ENCODE measurements at regions of chr11 and their contacts with region 1.

Region 1: DNA sequence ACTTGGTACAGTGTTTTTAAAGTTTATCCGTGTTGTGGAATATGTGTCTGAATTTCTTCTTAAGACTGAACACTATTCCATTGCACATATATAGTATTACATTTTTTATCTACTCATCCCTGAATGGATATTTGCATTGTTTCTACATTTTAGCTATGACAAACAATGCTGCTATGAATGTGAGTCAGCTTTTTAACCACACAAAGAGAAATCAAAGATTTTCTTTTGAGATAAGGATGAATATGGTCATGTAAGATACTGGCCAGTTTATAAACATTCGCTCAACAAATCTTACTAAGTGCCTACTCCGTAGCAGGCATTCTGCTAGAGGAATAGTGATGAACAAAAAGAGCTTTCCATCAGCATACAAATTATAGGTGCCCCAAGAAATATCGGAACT is 16.5 kb upstream of the OR9G4 start:
- DNase-seq: no peak
- ATAC-seq: no peak
- H3K4me3 ChIP-seq: no peak overlapping the region
- H3K27ac ChIP-seq: no peak overlapping the region
- H3K4me1 ChIP-seq: no peaks in the 10 kb centered on the region
- H3K27me3 ChIP-seq: peaks cover 0 to 5% (median 0%) of the 10 kb centered on the region in 9 donors
- CTCF ChIP-seq: no peak
- POLR2A ChIP-seq: no peak

Region 2: DNA sequence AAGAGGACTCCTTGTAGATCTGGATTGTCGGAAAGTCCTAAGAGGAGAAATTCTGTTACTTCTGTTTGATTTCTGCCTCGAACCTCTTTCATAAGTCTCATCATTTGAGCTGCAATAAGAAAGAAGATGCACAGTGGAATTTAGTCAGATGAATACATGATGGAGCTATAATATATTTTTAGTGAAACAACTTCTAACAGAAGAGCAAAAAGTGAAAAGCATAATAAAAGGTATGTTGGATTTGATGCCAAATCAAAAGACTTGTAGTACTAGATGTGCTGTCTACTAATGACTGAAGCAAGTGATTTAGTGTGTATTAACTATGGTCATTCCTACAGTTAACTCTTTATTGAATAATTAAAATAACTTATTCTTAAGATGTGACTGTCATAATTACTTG is 122.6 kb before region 1 on chr11 and contains the start of gene OR5AP2:
- intact Hi-C with region 1: loop called in 1 of 10 experiments (anchors 5 kb)
- DNase-seq: no peak
- ATAC-seq: no peak
- H3K4me3 ChIP-seq: no peak within 1 kb of the TSS
- H3K27ac ChIP-seq: no peak within 1 kb of the TSS
- H3K4me1 ChIP-seq: no peaks in the 10 kb centered on the region
- H3K27me3 ChIP-seq: no peaks in the 10 kb centered on the region
- CTCF ChIP-seq: no peak
- POLR2A ChIP-seq: no peak
- total RNA-seq, gene OR5AP2: not detected

Region 3: GRCh38 chr11:56700242-56700913 is 64.6 kb before region 1 on chr11:
- intact Hi-C with region 1: no loop called
- DNase-seq: no peak
- ATAC-seq: peak in 1 of 4 donors; percentile 45
- H3K4me3 ChIP-seq: no peak overlapping the region
- H3K27ac ChIP-seq: no peak overlapping the region
- H3K4me1 ChIP-seq: no peaks in the 10 kb centered on the region
- H3K27me3 ChIP-seq: no peaks in the 10 kb centered on the region
- CTCF ChIP-seq: no peak
- POLR2A ChIP-seq: no peak

Region 4: DNA sequence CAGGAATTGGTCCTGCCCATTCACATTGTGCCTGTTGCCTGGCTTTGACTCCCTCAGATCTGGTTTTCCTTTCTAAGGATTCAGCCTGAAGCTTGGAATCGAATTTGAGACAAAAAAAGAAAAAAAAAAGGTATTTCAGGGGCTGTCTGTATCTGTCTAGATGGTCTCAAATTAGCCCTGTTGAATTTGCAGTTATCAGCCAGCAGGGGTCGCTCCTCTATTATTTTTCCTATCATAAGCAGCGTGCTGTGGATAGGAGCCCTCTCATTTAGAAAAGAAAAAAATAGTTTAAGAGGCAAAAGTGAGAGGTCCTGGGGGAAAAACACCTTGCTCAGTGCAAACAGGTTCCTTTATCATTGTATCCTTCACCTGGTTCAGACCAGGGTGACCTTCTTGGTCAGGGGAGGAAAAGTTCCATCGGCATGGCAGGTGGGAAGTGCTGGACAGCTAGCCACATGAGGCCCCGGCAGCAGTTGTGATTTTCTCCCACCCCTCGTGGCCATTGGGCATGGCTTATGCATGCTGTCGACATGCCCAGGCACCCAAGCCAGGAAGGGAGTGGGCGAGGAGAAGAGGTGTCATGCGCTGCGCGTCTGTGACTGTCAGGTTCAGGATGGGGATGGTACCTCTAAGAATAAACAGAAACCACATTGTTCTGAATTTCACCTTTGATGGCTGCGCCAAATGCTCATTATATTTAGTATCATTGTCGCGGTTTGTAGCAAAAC is 236.9 kb after region 1 on chr11:
- intact Hi-C with region 1: no loop called
- DNase-seq: no peak
- ATAC-seq: no peak
- H3K4me3 ChIP-seq: no peak overlapping the region
- H3K27ac ChIP-seq: no peak overlapping the region
- H3K4me1 ChIP-seq: no peaks in the 10 kb centered on the region
- H3K27me3 ChIP-seq: no peaks in the 10 kb centered on the region
- CTCF ChIP-seq: peak in 1 of 12 donors; percentile 13
- POLR2A ChIP-seq: no peak